A549 (cell line): ENCODE measurements at regions of chr5 and their contacts with region 1.

Region 1: DNA sequence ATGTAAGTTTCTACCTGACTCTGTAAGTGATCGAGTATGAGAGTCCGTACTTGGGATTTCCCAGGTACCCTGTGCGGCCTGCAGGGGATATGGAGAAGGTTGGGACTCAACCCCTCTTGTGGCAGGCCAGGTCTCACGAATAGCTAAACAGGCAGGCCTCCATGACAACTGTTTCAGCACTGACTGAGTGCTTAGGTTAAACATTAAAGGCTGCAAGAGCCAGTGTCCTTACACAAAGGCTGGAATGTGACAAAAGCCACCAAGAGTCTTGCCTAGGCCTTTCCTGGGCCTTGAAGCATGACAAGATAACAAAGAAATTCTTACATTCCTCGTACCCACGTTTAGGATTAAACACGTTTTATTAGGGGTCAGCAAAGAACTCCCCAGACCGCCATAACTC is 58.6 kb downstream of the THBS4 start:
- DNase-seq: peak in 1 of 2 experiments; percentile 6
- ATAC-seq: peak in 1 of 2 experiments; percentile 38; a peak in 3 of 6 replicates
- H3K4me3 ChIP-seq: no peak overlapping the region
- H3K27ac ChIP-seq: no peak overlapping the region
- H3K4me1 ChIP-seq: no peaks in the 10 kb centered on the region
- CTCF ChIP-seq: no peak
- EP300 ChIP-seq: no peak
- POLR2A ChIP-seq: no peak
- RAD21 ChIP-seq: no peak

Region 2: DNA sequence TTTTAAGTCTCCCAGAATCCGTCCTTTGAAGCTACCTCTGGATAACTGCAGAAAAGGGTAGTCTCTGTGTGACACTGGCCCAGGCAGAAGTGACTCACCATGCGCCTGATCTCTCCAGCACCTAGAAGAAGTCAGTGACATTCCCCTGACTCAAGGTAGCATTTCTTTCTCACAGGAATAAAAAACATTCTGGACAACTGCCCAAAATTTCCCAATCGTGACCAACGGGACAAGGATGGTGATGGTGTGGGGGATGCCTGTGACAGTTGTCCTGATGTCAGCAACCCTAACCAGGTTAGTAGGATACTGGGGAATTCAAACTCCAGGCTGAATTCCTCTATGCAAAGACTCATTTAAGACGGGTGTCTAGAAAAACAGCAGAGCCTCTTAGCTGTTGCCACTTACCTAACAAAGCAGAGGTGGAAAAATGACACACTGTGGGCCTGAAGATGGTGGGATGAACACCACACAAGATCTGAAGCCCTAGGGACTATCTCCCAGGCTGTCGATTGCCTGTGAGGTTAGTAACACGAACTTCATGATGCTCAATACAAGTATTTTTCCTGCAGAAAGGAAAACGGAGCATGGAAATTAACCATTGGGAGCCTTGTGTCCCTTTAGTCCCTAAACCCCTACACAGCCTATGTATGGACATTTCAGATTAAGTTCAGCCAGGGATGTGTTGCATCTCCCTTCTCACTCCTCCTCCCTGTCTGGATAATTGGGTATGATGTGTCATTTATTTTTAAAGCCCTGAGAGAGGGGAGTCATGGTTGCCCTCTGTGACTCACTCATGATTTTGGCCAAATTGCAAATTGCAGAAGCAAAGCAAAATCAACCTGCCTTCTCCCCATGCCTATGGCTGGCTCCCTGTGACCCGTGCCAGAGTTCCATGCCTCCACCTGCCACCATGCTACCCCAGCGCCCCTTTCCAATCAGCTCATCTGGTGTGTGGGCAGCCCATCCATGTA is 21.4 kb before region 1 on chr5:
- CTCF ChIA-PET with region 1: interaction called, 15 read pairs
- POLR2A ChIA-PET with region 1: no interaction called
- DNase-seq: no peak
- ATAC-seq: no peak
- H3K4me3 ChIP-seq: no peak overlapping the region
- H3K27ac ChIP-seq: no peak overlapping the region
- H3K4me1 ChIP-seq: no peaks in the 10 kb centered on the region
- CTCF ChIP-seq: no peak
- EP300 ChIP-seq: no peak
- POLR2A ChIP-seq: no peak
- RAD21 ChIP-seq: no peak

Region 3: GRCh38 chr5:80246001-80246758 is 152.4 kb after region 1 on chr5:
- CTCF ChIA-PET with region 1: interaction called, 11 read pairs
- POLR2A ChIA-PET with region 1: no interaction called
- DNase-seq: no peak
- ATAC-seq: no peak
- H3K4me3 ChIP-seq: no peak overlapping the region
- H3K27ac ChIP-seq: no peak overlapping the region; a peak in 1 of 6 replicates
- H3K4me1 ChIP-seq: peaks cover 21% of the 10 kb centered on the region
- CTCF ChIP-seq: no peak
- EP300 ChIP-seq: no peak
- POLR2A ChIP-seq: no peak
- RAD21 ChIP-seq: no peak

Region 4: GRCh38 chr5:80284720-80285119 is 190.9 kb after region 1 on chr5:
- CTCF ChIA-PET with region 1: interaction called, 12 read pairs
- POLR2A ChIA-PET with region 1: no interaction called
- DNase-seq: no peak
- ATAC-seq: no peak
- H3K4me3 ChIP-seq: no peak overlapping the region
- H3K27ac ChIP-seq: no peak overlapping the region
- H3K4me1 ChIP-seq: no peaks in the 10 kb centered on the region
- CTCF ChIP-seq: no peak
- EP300 ChIP-seq: no peak
- POLR2A ChIP-seq: no peak
- RAD21 ChIP-seq: no peak

Region 5: GRCh38 chr5:80308526-80308925 is 214.7 kb after region 1 on chr5:
- CTCF ChIA-PET with region 1: interaction called, 161 read pairs
- POLR2A ChIA-PET with region 1: no interaction called
- DNase-seq: peak in 1 of 2 experiments; percentile 18
- ATAC-seq: no peak
- H3K4me3 ChIP-seq: no peak overlapping the region
- H3K27ac ChIP-seq: no peak overlapping the region
- H3K4me1 ChIP-seq: no peaks in the 10 kb centered on the region
- CTCF ChIP-seq: no peak
- EP300 ChIP-seq: no peak
- POLR2A ChIP-seq: no peak
- RAD21 ChIP-seq: no peak